A673 (cell line): ENCODE measurements at regions of chr17 and their contacts with region 1.

Region 1: DNA sequence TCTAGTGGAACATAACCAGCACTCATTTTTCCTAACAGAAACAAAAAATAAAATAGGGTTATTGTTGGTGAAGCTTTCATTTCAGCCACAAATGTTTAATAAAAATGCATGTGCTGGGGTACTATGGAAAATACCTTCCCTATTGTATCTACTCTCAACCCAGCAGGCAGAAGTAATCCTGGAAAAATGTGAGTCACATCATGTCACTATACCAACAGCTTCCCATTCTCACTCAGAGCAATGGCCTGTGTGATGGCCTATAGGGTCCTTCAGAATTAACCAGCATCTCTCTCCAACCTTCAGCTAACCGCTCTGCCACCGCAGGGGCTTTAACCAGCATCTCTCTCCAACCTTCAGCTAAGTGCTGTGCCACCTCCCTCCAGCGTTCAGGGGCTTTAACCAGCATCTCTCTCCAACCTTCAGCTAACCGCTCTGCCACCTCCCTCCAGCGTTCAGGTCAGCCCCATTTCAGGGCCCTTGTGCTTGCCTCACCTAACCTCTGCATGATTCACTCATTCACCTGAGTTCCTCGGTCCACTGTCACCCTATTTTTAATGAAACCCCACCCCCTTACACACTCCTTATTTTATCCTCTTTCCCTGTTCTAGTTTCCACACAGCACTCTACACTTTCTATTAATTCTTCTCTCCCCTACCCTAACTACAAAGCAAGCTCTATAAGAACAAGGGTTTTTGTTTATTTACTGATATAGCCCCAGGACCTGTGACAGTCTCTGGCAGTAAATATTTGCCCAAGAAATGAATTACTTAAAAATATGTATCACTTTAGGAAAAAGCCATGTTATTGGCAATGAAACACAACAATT is 34.0 kb downstream of the UBE2G1 start:
- DNase-seq: no peak
- H3K4me3 ChIP-seq: no peak overlapping the region
- H3K27ac ChIP-seq: peak overlapping the region; percentile 41
- H3K4me1 ChIP-seq: peaks cover 35% of the 10 kb centered on the region
- H3K27me3 ChIP-seq: no peaks in the 10 kb centered on the region
- CTCF ChIP-seq: no peak

Region 2: GRCh38 chr17:4354862-4355514 is 22.5 kb after region 1 on chr17:
- CTCF ChIA-PET with region 1: no interaction called
- POLR2A ChIA-PET with region 1: no interaction called
- intact Hi-C with region 1: no loop called
- DNase-seq: no peak
- H3K4me3 ChIP-seq: no peak overlapping the region
- H3K27ac ChIP-seq: no peak overlapping the region
- H3K4me1 ChIP-seq: peaks cover 3% of the 10 kb centered on the region
- H3K27me3 ChIP-seq: no peaks in the 10 kb centered on the region
- CTCF ChIP-seq: no peak

Region 3: GRCh38 chr17:4833178-4833940 is 500.9 kb after region 1 on chr17 and contains the start of gene MINK1:
- CTCF ChIA-PET with region 1: no interaction called
- POLR2A ChIA-PET with region 1: interaction called, 19 read pairs
- intact Hi-C with region 1: no loop called
- DNase-seq: peak; percentile 97
- H3K4me3 ChIP-seq: peak within 1 kb of the TSS; percentile 88
- H3K27ac ChIP-seq: peak within 1 kb of the TSS; percentile 84
- H3K4me1 ChIP-seq: no peaks in the 10 kb centered on the region
- H3K27me3 ChIP-seq: no peaks in the 10 kb centered on the region
- CTCF ChIP-seq: no peak
- total RNA-seq, gene MINK1: 67.7 and 72.1 TPM in 2 replicates